ENCODE measurements at regions of chr20 and their contacts with region 1.

Region 1: DNA sequence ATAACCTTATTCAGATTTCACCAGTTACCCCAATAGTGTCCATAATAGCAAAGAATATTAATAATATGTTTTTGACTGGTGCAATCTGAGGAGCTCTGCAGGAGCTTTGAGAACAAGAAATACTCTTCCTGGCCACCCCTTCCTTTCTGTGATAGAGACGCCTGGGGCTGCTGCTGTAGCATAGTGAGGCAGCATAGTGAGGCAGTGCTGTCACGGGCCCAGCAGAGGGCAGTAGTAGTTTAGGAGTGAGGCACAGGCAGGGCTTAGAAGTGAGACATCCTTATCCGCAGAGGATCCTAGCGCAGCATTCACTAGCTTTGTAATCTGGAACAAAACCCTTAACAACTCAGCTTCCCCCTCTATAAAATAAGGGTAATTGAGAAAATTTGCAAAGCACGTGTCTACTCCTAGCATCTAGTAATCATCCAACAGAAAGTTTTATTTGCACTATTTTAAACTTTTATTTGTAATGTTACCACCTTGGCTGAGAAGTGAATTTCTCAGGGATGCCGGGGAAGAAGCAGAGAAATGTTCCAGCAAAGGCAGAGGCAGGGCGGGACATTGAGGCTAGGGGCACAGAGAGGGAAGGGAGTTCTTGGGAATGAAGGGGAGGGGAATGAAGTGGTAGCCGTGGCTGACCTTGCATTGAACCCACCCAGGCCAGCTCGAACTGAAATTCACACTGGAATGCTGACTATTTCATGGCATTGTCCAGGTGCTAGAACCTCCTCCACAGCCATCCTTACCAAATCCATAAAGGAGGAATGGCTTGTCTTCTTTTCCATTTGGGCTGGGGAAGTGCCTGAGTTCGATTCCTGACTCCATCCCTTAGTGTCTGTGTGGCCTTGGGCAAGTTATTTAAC is 78.8 kb downstream of the CDS2 start:
- DNase-seq: peak; percentile 79
- H3K4me3 Mint-ChIP-seq: no peak overlapping the region
- H3K27ac Mint-ChIP-seq: no peak overlapping the region
- H3K4me1 Mint-ChIP-seq: peaks cover 2% of the 10 kb centered on the region
- H3K27me3 Mint-ChIP-seq: no peaks in the 10 kb centered on the region

Region 2: DNA sequence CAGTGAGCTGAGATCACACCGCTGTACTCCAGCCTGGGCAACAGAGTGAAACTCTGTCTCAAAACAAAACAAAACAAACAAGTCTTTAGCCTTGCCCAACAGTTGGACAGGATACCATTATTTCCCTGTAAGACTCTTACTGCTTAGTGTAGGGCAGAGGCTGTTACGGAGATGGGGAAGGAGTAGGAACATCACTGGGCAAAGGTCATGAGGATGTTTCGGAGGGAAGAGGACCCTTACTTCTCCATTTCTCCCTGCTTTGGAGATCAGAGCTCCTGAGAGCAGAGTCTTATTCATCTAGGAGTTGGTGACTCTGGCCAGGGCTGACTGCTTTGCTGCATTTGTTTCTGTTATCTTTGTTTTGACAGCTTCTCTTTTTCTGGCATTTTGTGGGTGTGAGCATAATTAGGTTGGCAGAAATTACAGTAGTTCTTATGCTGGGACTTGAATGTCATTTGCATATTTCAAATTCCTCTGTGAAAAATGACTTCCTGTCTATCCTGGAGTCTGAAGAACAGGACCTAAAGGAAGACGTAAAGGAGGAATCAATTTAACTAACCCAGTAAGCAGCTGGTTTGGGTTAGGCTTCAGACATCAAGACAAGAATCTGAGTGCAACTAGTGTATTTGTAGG is 10.2 kb after region 1 on chr20:
- CTCF ChIA-PET with region 1: interaction called, 68 read pairs
- POLR2A ChIA-PET with region 1: no interaction called
- intact Hi-C with region 1: no loop called
- DNase-seq: no peak
- H3K4me3 Mint-ChIP-seq: no peak overlapping the region
- H3K27ac Mint-ChIP-seq: no peak overlapping the region
- H3K4me1 Mint-ChIP-seq: no peaks in the 10 kb centered on the region
- H3K27me3 Mint-ChIP-seq: no peaks in the 10 kb centered on the region

Region 3: GRCh38 chr20:5222919-5223634 is 17.5 kb after region 1 on chr20:
- CTCF ChIA-PET with region 1: interaction called, 68 read pairs
- POLR2A ChIA-PET with region 1: no interaction called
- intact Hi-C with region 1: loop called (anchors 2 kb)
- DNase-seq: peak; percentile 76
- H3K4me3 Mint-ChIP-seq: no peak overlapping the region
- H3K27ac Mint-ChIP-seq: no peak overlapping the region
- H3K4me1 Mint-ChIP-seq: no peaks in the 10 kb centered on the region
- H3K27me3 Mint-ChIP-seq: no peaks in the 10 kb centered on the region

Region 4: GRCh38 chr20:5297280-5298004 is 91.9 kb after region 1 on chr20:
- CTCF ChIA-PET with region 1: no interaction called
- POLR2A ChIA-PET with region 1: no interaction called
- intact Hi-C with region 1: no loop called
- DNase-seq: no peak
- H3K4me3 Mint-ChIP-seq: no peak overlapping the region
- H3K27ac Mint-ChIP-seq: no peak overlapping the region
- H3K4me1 Mint-ChIP-seq: no peaks in the 10 kb centered on the region
- H3K27me3 Mint-ChIP-seq: peaks cover 14% of the 10 kb centered on the region

Measured in activated CD4-positive, alpha-beta memory T cell treated with anti-CD3 and anti-CD28 coated beads for 36 hours (primary cell).